A549 (cell line): ENCODE measurements at regions of chr19 and their contacts with region 1.

Region 1: DNA sequence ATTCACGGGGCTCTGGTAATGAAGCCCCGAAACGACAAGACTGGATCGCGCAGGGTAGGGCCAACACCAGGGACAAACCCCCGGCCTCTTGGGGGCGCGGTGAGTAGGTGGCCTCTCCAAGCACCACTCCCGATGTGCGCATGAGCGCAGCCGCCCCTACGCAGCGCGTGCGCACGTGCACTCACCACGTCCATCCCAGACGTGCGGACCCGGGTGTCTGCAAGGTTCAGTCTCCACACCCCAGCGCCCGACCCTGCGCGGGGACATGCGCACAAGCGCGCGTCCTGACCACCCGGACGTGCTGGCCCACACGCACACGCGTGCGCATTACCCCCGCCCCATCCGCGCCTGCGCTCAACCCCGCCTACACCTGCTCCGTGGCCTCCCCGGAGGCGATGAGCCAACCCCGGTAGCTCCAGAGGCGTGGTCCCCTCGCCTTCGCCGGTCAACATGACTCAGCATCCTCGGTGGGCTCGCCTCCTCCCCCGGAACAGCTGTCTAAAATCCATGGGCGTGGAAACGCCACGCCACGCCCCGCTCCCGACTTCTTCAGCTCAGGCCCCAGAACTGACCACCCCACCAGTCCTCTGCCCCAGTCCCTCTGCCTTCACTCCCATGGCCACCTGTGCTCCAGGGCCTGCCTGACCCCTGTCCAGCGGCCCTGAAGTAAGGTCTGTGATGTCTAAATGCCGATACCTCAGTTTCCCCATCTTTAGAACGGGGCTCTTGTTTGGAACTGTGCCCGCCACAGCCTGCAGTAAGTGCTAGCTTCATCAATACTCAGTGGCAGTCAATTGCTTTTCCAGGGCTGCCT is 5.6 kb upstream of the GPI start:
- DNase-seq: peak; percentile 100
- ATAC-seq: peak; percentile 92 to 96
- H3K4me3 ChIP-seq: peak overlapping the region; percentile 47
- H3K27ac ChIP-seq: peak overlapping the region; percentile 90 to 92
- H3K4me1 ChIP-seq: peaks cover 20% of the 10 kb centered on the region
- CTCF ChIP-seq: peak; percentile 88
- EP300 ChIP-seq: peak in 1 of 2 experiments; percentile 52; a peak in 1 of 5 replicates
- POLR2A ChIP-seq: peak; percentile 62
- RAD21 ChIP-seq: peak in 1 of 2 experiments; percentile 29; a peak in 3 of 5 replicates

Region 2: GRCh38 chr19:34345947-34346351 is 13.4 kb before region 1 on chr19:
- CTCF ChIA-PET with region 1: interaction called, 348 read pairs
- POLR2A ChIA-PET with region 1: interaction called, 6 read pairs
- DNase-seq: peak; percentile 81 to 91
- ATAC-seq: peak; percentile 81 to 89; a peak in 5 of 6 replicates
- H3K4me3 ChIP-seq: no peak overlapping the region
- H3K27ac ChIP-seq: no peak overlapping the region
- H3K4me1 ChIP-seq: no peaks in the 10 kb centered on the region
- CTCF ChIP-seq: peak; percentile 78
- EP300 ChIP-seq: no peak
- POLR2A ChIP-seq: no peak
- RAD21 ChIP-seq: peak; percentile 50 to 84

Region 3: DNA sequence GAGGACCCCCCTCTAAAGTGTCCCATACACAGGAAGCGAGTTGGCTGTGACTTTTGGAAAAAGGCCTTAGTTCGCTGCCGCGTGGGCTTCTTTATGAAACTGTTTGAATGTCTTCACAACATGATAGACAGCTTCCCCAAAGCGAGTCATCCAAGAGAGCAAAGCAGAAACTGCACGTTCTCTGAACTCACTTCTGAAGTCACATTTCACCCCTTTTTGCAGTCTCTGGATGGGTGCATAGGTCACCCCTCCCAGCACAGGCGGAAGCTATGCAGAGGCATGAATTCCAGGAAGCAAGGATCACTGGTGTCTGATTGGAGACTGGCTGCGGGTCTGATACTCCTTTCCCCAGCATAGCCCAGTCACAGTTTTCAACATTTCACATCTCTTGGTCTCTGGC is 16.3 kb after region 1 on chr19:
- CTCF ChIA-PET with region 1: interaction called, 20 read pairs
- POLR2A ChIA-PET with region 1: interaction called, 7 read pairs
- DNase-seq: no peak
- ATAC-seq: no peak
- H3K4me3 ChIP-seq: no peak overlapping the region
- H3K27ac ChIP-seq: no peak overlapping the region
- H3K4me1 ChIP-seq: no peaks in the 10 kb centered on the region
- CTCF ChIP-seq: no peak
- EP300 ChIP-seq: no peak
- POLR2A ChIP-seq: no peak
- RAD21 ChIP-seq: no peak

Region 4: GRCh38 chr19:34397853-34398252 is 38.5 kb after region 1 on chr19:
- CTCF ChIA-PET with region 1: interaction called, 17 read pairs
- POLR2A ChIA-PET with region 1: interaction called, 5 read pairs
- DNase-seq: no peak
- ATAC-seq: no peak
- H3K4me3 ChIP-seq: no peak overlapping the region
- H3K27ac ChIP-seq: no peak overlapping the region
- H3K4me1 ChIP-seq: peaks cover 6% of the 10 kb centered on the region; the same call in 2 of the 3 replicates
- CTCF ChIP-seq: no peak
- EP300 ChIP-seq: no peak
- POLR2A ChIP-seq: no peak
- RAD21 ChIP-seq: no peak

Region 5: GRCh38 chr19:34428549-34429285 is 69.4 kb after region 1 on chr19:
- CTCF ChIA-PET with region 1: interaction called, 4 read pairs
- POLR2A ChIA-PET with region 1: interaction called, 10 read pairs
- DNase-seq: peak; percentile 52 to 66
- ATAC-seq: peak; percentile 75 to 76
- H3K4me3 ChIP-seq: peak overlapping the region; percentile 78
- H3K27ac ChIP-seq: peak overlapping the region; percentile 93 to 94
- H3K4me1 ChIP-seq: peaks cover 24% of the 10 kb centered on the region
- CTCF ChIP-seq: no peak; the same call in 2 of the 3 replicates
- EP300 ChIP-seq: no peak
- POLR2A ChIP-seq: no peak
- RAD21 ChIP-seq: no peak